ENCODE measurements at regions of chr11 and their contacts with region 1.

Region 1: DNA sequence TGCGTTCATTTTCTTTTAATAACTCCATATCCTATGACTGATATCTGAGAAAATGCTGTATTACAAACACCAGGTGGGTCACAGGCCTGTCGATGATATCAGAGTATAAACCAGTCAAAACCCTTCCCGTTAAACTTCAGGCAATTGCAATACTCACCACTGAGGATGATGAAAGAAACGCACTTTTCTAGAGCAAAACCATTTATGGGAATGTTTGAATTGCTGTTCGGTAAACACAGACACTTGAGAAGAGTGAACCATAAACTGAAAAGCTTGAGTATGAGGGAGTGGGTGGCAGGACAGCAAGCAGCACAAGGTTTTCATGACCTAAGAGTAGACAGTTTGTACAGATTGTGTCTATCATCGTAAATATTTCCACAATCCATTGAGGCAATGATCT is 139.8 kb upstream of the CEP126 start:
- DNase-seq: no peak
- ATAC-seq: no peak
- H3K4me3 ChIP-seq: no peak overlapping the region
- H3K27ac ChIP-seq: no peak overlapping the region
- H3K4me1 ChIP-seq: no peaks in the 10 kb centered on the region
- H3K27me3 ChIP-seq: no peaks in the 10 kb centered on the region
- CTCF ChIP-seq: no peak
- POLR2A ChIP-seq: no peak

Region 2: GRCh38 chr11:101718402-101718801 is 56.6 kb before region 1 on chr11:
- intact Hi-C with region 1: loop called in 1 of 2 experiments (anchors 10 kb)
- DNase-seq: no peak
- ATAC-seq: no peak
- H3K4me3 ChIP-seq: no peak overlapping the region
- H3K27ac ChIP-seq: no peak overlapping the region
- H3K4me1 ChIP-seq: no peaks in the 10 kb centered on the region
- H3K27me3 ChIP-seq: no peaks in the 10 kb centered on the region
- CTCF ChIP-seq: no peak
- POLR2A ChIP-seq: no peak

Measured in right lobe of liver (tissue), 6 donors.